ENCODE measurements at regions of chr11 and their contacts with region 1.

Region 1: DNA sequence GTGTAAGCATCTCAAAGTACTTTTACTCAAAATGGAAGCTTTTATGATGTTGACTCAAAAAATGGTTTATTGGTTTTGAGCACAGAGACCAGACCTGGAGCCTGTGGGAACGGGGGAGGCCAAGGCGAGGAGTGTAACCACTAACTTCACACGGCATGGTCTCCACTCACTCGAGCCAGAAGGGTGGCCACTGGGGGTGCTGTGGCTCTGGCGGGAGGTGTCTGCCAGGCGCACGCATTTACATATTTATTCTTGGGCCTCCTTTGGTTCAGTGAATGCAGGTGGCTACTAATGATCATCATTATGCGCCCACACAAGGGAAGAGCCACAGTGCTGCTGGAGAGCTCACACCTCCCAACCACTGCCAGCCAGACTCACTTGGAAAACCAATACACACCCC is 64.6 kb downstream of the FLRT1 start:
- DNase-seq: peak in 5 of 10 donors; percentile 48 to 94 (median 55)

Region 2: GRCh38 chr11:64048042-64048854 is 52.1 kb before region 1 on chr11:
- intact Hi-C with region 1: loop called (anchors 2 kb)
- DNase-seq: peak; percentile 86 to 100 (median 94)

Measured in posterior cingulate gyrus (tissue), 11 donors.